Activated B cell treated with CpG ODN at 0.5 μM for 24 hours (primary cell): ENCODE measurements at regions of chr1 and their contacts with region 1.

Region 1: DNA sequence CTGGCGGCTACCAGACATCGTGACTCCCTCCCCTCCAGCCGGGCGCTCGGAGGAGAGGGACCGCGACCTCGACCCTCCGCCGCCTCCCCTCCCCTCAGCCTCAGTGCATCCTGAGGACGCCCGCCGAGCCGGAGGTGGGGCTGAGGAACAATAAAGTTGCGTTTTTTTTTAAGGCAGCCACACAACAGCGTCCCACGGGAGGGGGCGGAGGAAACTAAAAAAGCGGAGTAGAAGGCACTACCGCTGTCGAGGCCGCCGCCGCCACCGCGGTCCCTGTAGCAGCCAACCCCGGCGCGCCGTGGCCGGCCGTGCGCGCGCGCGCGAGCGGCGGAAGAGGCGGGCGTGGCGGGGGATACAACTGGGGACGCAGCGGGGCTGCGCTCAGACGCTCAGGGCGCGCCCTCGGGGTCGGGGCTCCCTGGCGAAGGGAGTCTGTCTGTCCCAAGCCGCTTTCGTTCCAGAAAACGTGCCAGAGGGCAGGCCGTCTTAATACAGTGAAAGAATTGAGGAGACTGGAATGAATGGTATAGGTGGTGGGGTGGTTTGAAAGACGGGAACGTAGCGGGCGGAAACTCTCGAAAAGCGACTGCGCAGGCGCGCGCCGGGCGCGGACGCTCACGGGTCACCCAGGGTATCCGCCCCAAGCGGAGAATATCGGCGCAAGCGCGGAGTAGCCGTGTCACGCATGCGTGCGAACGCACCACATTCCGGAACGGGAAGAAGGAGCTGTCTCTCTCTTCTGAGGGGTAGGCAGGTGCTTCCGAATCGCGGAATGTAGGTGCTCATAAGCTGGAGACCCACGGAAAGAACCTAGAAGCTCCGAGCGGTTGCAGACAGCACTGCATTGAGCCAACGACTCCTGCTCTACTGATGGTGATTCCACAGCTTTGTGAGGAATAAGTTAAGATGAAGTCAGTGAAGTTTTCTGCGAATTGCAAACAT is at the start of gene COP1:
- DNase-seq: peak; percentile 92
- ATAC-seq: peak; percentile 82
- H3K4me3 Mint-ChIP-seq: peak within 1 kb of the TSS; percentile 95
- H3K27ac Mint-ChIP-seq: peak within 1 kb of the TSS; percentile 97
- H3K4me1 Mint-ChIP-seq: peaks cover 50% of the 10 kb centered on the region
- H3K27me3 Mint-ChIP-seq: peaks cover 2% of the 10 kb centered on the region
- CTCF ChIP-seq: no peak
- total RNA-seq, gene COP1: 46.3 and 52.1 TPM in 2 replicates

Region 2: GRCh38 chr1:176157995-176158394 is 49.2 kb before region 1 on chr1:
- CTCF ChIA-PET with region 1: no interaction called
- POLR2A ChIA-PET with region 1: no interaction called
- intact Hi-C with region 1: loop called (anchors 10 kb)
- DNase-seq: no peak
- ATAC-seq: no peak
- H3K4me3 Mint-ChIP-seq: no peak overlapping the region
- H3K27ac Mint-ChIP-seq: no peak overlapping the region
- H3K4me1 Mint-ChIP-seq: peaks cover 7% of the 10 kb centered on the region
- H3K27me3 Mint-ChIP-seq: no peaks in the 10 kb centered on the region
- CTCF ChIP-seq: no peak

Region 3: GRCh38 chr1:176174108-176174507 is 33.1 kb before region 1 on chr1:
- CTCF ChIA-PET with region 1: no interaction called
- POLR2A ChIA-PET with region 1: no interaction called
- intact Hi-C with region 1: loop called (anchors 5 kb)
- DNase-seq: no peak
- ATAC-seq: no peak
- H3K4me3 Mint-ChIP-seq: no peak overlapping the region
- H3K27ac Mint-ChIP-seq: no peak overlapping the region
- H3K4me1 Mint-ChIP-seq: peaks cover 17% of the 10 kb centered on the region
- H3K27me3 Mint-ChIP-seq: no peaks in the 10 kb centered on the region
- CTCF ChIP-seq: no peak

Region 4: GRCh38 chr1:176252191-176252590 is 45.0 kb after region 1 on chr1:
- CTCF ChIA-PET with region 1: no interaction called
- POLR2A ChIA-PET with region 1: no interaction called
- intact Hi-C with region 1: no loop called
- DNase-seq: no peak
- ATAC-seq: no peak
- H3K4me3 Mint-ChIP-seq: no peak overlapping the region
- H3K27ac Mint-ChIP-seq: no peak overlapping the region
- H3K4me1 Mint-ChIP-seq: no peaks in the 10 kb centered on the region
- H3K27me3 Mint-ChIP-seq: no peaks in the 10 kb centered on the region
- CTCF ChIP-seq: no peak